ENCODE measurements at regions of chr10 and their contacts with region 1.

Region 1: GRCh38 chr10:94320285-94320914 is 42.3 kb downstream of the NOC3L start:
- DNase-seq: peak; percentile 68
- H3K4me3 Mint-ChIP-seq: no peak overlapping the region
- H3K27ac Mint-ChIP-seq: no peak overlapping the region
- H3K4me1 Mint-ChIP-seq: peaks cover 4% of the 10 kb centered on the region
- H3K27me3 Mint-ChIP-seq: no peaks in the 10 kb centered on the region

Region 2: GRCh38 chr10:94279835-94280709 is 40.3 kb before region 1 on chr10:
- CTCF ChIA-PET with region 1: interaction called, 29 read pairs
- POLR2A ChIA-PET with region 1: no interaction called
- DNase-seq: peak; percentile 64
- H3K4me3 Mint-ChIP-seq: no peak overlapping the region
- H3K27ac Mint-ChIP-seq: no peak overlapping the region
- H3K4me1 Mint-ChIP-seq: peaks cover 14% of the 10 kb centered on the region
- H3K27me3 Mint-ChIP-seq: peaks cover 22% of the 10 kb centered on the region

Region 3: DNA sequence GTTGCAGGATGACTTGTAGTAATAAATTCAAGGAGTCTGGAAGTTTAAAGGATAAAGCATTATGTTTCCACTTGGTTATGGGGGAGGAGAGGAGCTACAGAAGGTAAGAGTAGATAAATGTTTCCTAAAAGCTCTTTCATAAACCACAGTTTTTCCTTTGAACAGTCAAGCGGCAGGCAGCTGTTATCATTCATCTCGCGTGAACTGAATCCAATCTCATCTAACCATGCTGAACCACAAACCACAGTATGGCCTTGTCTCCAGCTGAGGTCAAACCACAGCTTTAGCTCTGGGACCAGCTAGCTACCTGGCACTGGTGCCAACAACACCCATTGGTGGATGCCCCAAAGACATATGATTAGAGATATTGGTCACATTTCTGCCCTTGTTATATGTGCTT is 21.0 kb before region 1 on chr10:
- CTCF ChIA-PET with region 1: interaction called, 15 read pairs
- POLR2A ChIA-PET with region 1: interaction called, 4 read pairs
- DNase-seq: peak; percentile 60
- H3K4me3 Mint-ChIP-seq: no peak overlapping the region
- H3K27ac Mint-ChIP-seq: no peak overlapping the region
- H3K4me1 Mint-ChIP-seq: peaks cover 22% of the 10 kb centered on the region
- H3K27me3 Mint-ChIP-seq: peaks cover 52% of the 10 kb centered on the region

Region 4: DNA sequence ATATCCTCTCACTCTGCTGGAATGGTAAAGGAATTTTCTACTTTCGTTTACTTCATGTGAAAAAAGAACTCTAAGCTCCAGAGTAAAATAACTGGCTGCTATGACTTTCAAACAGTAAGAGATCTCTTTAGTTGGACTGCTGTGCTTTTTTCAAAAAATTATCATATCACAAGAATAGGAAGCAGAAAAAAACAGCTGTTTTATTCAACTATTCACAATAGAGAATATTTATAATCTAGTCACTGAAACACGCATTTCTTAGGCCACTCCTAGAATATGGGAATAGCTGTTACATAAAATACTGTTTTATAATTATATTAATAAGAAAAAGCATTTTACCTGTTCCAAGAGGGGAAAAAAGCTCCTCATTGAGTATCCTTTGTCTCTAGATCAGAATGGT is 12.7 kb after region 1 on chr10:
- CTCF ChIA-PET with region 1: interaction called, 39 read pairs
- POLR2A ChIA-PET with region 1: no interaction called
- DNase-seq: no peak
- H3K4me3 Mint-ChIP-seq: no peak overlapping the region
- H3K27ac Mint-ChIP-seq: no peak overlapping the region
- H3K4me1 Mint-ChIP-seq: no peaks in the 10 kb centered on the region
- H3K27me3 Mint-ChIP-seq: no peaks in the 10 kb centered on the region

Measured in activated CD4-positive, alpha-beta memory T cell treated with anti-CD3 and anti-CD28 coated beads, Interleukin-2, amount 10 ng/mL, durations not matched to agents 7 days and 5 days (primary cell).